GM10248 (cell line): ENCODE measurements at regions of chr2 and their contacts with region 1.

Region 1: GRCh38 chr2:218876562-218877219 is 4.0 kb upstream of the WNT10A start:
- DNase-seq: peak; percentile 69
- CTCF ChIP-seq: peak; percentile 95

Region 2: DNA sequence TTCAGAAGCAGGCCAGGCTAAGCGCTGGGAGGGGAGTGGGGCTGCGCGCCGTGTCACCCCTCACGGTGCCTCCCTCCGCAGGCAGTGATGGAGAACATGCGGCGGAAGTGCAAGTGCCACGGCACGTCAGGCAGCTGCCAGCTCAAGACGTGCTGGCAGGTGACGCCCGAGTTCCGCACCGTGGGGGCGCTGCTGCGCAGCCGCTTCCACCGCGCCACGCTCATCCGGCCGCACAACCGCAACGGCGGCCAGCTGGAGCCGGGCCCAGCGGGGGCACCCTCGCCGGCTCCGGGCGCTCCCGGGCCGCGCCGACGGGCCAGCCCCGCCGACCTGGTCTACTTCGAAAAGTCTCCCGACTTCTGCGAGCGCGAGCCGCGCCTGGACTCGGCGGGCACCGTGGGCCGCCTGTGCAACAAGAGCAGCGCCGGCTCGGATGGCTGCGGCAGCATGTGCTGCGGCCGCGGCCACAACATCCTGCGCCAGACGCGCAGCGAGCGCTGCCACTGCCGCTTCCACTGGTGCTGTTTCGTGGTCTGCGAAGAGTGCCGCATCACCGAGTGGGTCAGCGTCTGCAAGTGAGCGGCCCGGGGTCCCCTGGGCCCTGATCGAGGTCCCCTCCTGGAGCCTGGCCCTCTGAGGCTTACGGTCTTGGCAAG is 16.1 kb after region 1 on chr2:
- CTCF ChIA-PET with region 1: interaction called, 916 read pairs
- POLR2A ChIA-PET with region 1: interaction called, 16 read pairs
- DNase-seq: peak; percentile 76
- CTCF ChIP-seq: peak; percentile 60

Region 3: GRCh38 chr2:218908721-218909619 is 32.3 kb after region 1 on chr2:
- CTCF ChIA-PET with region 1: interaction called, 916 read pairs
- POLR2A ChIA-PET with region 1: no interaction called
- DNase-seq: peak; percentile 92
- CTCF ChIP-seq: no peak

Region 4: DNA sequence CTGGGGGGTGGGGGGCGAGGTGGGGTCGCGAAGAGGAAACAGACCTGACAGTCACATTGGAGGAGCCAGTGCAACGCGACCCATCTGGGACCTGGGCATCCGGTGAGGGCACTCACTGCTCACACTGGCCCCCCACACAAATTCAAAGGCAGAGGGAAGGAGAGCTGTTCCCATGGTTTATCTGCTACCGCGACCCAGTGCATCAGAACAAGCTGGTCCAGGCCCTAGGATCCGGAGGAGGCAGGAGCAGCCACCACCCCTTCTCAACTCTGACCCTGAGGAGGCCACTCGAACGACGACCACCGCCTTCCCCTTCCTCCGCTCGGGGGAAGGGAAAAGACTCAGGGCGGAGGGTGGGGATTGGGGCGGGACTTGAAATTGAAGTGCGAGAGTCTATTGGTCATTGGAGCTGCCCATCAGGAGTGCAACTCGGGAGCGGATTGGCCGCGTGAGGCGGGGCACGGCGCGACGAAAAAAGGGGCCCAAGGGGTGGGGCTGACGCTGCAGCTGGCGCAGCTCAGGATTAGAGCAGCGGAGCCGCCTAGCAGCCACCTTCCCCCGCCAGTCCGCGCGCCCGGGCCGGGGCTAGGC is 82.5 kb after region 1 on chr2 and contains the start of gene CDK5R2:
- CTCF ChIA-PET with region 1: interaction called, 16 read pairs
- POLR2A ChIA-PET with region 1: no interaction called
- DNase-seq: peak; percentile 99
- CTCF ChIP-seq: no peak

Region 5: GRCh38 chr2:218995972-218996711 is 119.5 kb after region 1 on chr2:
- CTCF ChIA-PET with region 1: interaction called, 10 read pairs
- POLR2A ChIA-PET with region 1: no interaction called
- DNase-seq: peak; percentile 88
- CTCF ChIP-seq: peak; percentile 92

Region 6: DNA sequence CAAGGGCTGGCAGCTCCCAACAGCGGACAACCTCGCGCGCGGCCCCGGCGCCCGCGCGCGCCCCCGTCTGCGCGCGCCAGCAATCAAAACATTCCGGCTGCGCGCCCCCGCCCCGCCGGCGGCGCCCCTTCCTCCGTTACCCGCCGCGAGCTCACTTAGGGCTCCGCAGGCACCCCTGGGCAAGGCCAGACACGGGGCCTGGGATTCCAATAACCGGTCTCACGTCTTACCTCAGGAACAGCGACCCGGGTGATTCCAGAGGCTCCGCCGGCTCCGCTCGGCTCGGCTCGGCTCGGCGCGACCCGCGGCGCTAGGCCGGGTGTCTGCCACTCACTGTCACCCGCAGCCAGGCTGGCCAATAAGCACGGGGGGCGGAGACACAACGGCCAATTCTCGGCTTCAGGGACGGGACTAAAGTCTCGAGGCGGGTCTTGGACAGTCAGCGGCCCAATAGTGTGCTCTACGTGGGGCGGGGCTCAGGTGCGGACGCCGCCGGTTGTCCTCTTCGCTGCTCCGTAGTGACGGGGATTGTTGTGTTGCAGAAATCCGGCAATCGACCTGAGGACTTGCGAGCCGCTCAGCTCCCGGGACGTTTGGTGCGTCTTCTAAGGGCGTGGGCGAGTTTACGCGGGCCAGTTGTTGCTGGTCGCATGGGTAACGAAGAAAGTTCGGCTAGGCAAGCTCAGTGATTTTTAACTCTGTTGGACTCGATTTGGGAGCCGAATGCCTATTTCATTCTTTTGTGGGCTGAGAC is 352.8 kb after region 1 on chr2 and contains the starts of genes ANKZF1 and ATG9A:
- CTCF ChIA-PET with region 1: no interaction called
- POLR2A ChIA-PET with region 1: no interaction called
- DNase-seq: peak; percentile 99
- CTCF ChIP-seq: no peak